ENCODE measurements at regions of chr13 and their contacts with region 1.

Region 1: GRCh38 chr13:44108331-44108858 is 228.7 kb downstream of the LACC1 start:
- DNase-seq: peak in 1 of 2 donors; percentile 56
- ATAC-seq: peak; percentile 28
- H3K4me3 ChIP-seq: no peak overlapping the region
- H3K27ac ChIP-seq: peak overlapping the region in 1 of 2 donors; percentile 41
- H3K4me1 ChIP-seq: peaks cover 6 to 13% of the 10 kb centered on the region in 2 donors
- H3K27me3 ChIP-seq: no peaks in the 10 kb centered on the region

Region 2: GRCh38 chr13:44068737-44069136 is 39.7 kb before region 1 on chr13:
- intact Hi-C with region 1: loop called in 1 of 2 experiments (anchors 5 kb)
- DNase-seq: no peak
- ATAC-seq: no peak
- H3K4me3 ChIP-seq: peak overlapping the region in 1 of 2 donors; percentile 2
- H3K27ac ChIP-seq: no peak overlapping the region
- H3K4me1 ChIP-seq: no peaks in the 10 kb centered on the region
- H3K27me3 ChIP-seq: no peaks in the 10 kb centered on the region

Region 3: DNA sequence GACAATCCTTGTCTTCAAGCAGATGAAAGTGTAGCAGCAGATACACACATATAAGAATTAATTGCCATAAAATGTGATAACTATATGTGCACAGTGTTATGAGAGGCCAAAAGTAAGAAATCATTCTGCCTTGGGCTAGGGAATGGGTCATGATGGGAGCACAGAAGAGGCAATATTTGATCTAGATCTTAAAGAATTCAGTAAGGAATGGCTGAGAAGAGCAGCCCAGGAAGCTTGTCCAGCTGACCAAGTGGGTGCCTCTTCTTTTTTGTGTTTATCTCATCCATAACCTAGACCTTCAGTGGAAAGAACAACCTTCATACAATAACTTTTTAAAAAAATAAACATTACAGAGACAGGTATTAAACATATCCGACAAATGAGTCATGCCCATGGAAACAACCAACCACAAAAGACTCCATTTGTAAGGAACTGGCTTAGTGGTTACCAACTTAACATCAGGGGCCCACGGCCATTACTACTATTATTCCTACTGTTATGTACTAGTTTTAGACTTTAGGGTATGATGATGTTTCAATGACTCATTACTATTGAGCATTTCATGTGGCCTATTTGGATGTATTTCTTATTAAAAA is 73.4 kb after region 1 on chr13:
- intact Hi-C with region 1: no loop called
- DNase-seq: no peak
- ATAC-seq: no peak
- H3K4me3 ChIP-seq: no peak overlapping the region
- H3K27ac ChIP-seq: no peak overlapping the region
- H3K4me1 ChIP-seq: no peaks in the 10 kb centered on the region
- H3K27me3 ChIP-seq: no peaks in the 10 kb centered on the region

Measured in aorta (tissue), 5 donors.